ENCODE measurements at regions of chr3 and their contacts with region 1.

Region 1: GRCh38 chr3:32296256-32297204 is 58.0 kb downstream of the CMTM8 start:
- DNase-seq: no peak
- ATAC-seq: peak; percentile 94
- H3K4me3 ChIP-seq: no peak overlapping the region
- H3K27ac ChIP-seq: no peak overlapping the region
- H3K4me1 ChIP-seq: no peaks in the 10 kb centered on the region
- H3K27me3 ChIP-seq: no peaks in the 10 kb centered on the region; a peak in 1 of 4 replicates
- CTCF ChIP-seq: peak; percentile 71 to 89 (median 81)
- EP300 ChIP-seq: no peak
- POLR2A ChIP-seq: no peak
- RAD21 ChIP-seq: peak; percentile 67

Region 2: GRCh38 chr3:32045091-32045964 is 251.2 kb before region 1 on chr3:
- CTCF ChIA-PET with region 1: no interaction called
- POLR2A ChIA-PET with region 1: no interaction called
- RAD21 ChIA-PET with region 1: no interaction called
- SMC1A ChIA-PET with region 1: no interaction called
- in situ Hi-C with region 1: no loop called
- intact Hi-C with region 1: no loop called
- DNase-seq: no peak
- ATAC-seq: no peak
- H3K4me3 ChIP-seq: no peak overlapping the region
- H3K27ac ChIP-seq: no peak overlapping the region
- H3K4me1 ChIP-seq: no peaks in the 10 kb centered on the region
- H3K27me3 ChIP-seq: no peaks in the 10 kb centered on the region
- CTCF ChIP-seq: no peak
- EP300 ChIP-seq: no peak
- POLR2A ChIP-seq: no peak
- RAD21 ChIP-seq: no peak

Region 3: GRCh38 chr3:32177702-32178198 is 118.8 kb before region 1 on chr3:
- CTCF ChIA-PET with region 1: interaction called, 11 read pairs
- POLR2A ChIA-PET with region 1: no interaction called
- RAD21 ChIA-PET with region 1: no interaction called
- SMC1A ChIA-PET with region 1: interaction called, 3 read pairs
- in situ Hi-C with region 1: no loop called
- intact Hi-C with region 1: loop called (anchors 5 kb)
- DNase-seq: no peak
- ATAC-seq: peak; percentile 95
- H3K4me3 ChIP-seq: no peak overlapping the region
- H3K27ac ChIP-seq: no peak overlapping the region
- H3K4me1 ChIP-seq: no peaks in the 10 kb centered on the region
- H3K27me3 ChIP-seq: no peaks in the 10 kb centered on the region; a peak in 1 of 4 replicates
- CTCF ChIP-seq: peak; percentile 63 to 86 (median 82)
- EP300 ChIP-seq: no peak
- POLR2A ChIP-seq: no peak
- RAD21 ChIP-seq: peak; percentile 48

Region 4: DNA sequence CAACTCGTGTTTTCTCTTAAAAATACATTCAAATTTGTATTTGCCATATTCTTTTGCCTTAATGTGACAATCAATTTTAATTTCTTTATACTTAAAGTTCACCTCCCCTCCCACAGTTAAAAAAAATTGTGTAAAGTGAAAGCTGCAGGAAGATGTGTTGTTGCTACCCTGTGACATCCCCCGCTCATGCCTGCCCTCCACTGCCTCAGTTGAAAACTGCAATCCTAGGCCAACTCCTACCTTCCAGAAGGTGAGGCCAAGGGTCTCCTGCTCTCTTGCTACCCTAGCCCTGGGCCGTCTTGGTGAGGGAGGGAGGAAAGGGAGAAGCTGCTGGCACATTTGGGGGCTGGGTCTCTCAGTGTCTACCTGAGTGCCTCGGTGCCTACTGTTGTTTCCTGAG is 38.1 kb after region 1 on chr3:
- CTCF ChIA-PET with region 1: interaction called, 25 read pairs
- POLR2A ChIA-PET with region 1: no interaction called
- RAD21 ChIA-PET with region 1: interaction called, 11 read pairs
- SMC1A ChIA-PET with region 1: interaction called, 9 read pairs
- in situ Hi-C with region 1: no loop called
- intact Hi-C with region 1: loop called (anchors 5 kb)
- DNase-seq: no peak
- ATAC-seq: peak; percentile 80
- H3K4me3 ChIP-seq: no peak overlapping the region
- H3K27ac ChIP-seq: no peak overlapping the region
- H3K4me1 ChIP-seq: no peaks in the 10 kb centered on the region
- H3K27me3 ChIP-seq: no peaks in the 10 kb centered on the region; a peak in 1 of 4 replicates
- CTCF ChIP-seq: peak; percentile 45 to 51 (median 51); a peak in 5 of 6 replicates
- EP300 ChIP-seq: no peak
- POLR2A ChIP-seq: no peak
- RAD21 ChIP-seq: peak; percentile 66

Region 5: GRCh38 chr3:32340039-32340438 is 43.5 kb after region 1 on chr3:
- CTCF ChIA-PET with region 1: interaction called, 25 read pairs
- POLR2A ChIA-PET with region 1: no interaction called
- RAD21 ChIA-PET with region 1: interaction called, 11 read pairs
- SMC1A ChIA-PET with region 1: interaction called, 9 read pairs
- in situ Hi-C with region 1: no loop called
- intact Hi-C with region 1: loop called (anchors 2 kb)
- DNase-seq: no peak
- ATAC-seq: peak; percentile 75
- H3K4me3 ChIP-seq: no peak overlapping the region
- H3K27ac ChIP-seq: no peak overlapping the region
- H3K4me1 ChIP-seq: no peaks in the 10 kb centered on the region
- H3K27me3 ChIP-seq: no peaks in the 10 kb centered on the region; a peak in 1 of 4 replicates
- CTCF ChIP-seq: peak; percentile 33 to 39 (median 38); a peak in 4 of 6 replicates
- EP300 ChIP-seq: no peak
- POLR2A ChIP-seq: no peak
- RAD21 ChIP-seq: peak; percentile 70

Region 6: GRCh38 chr3:32401556-32402081 is 105.1 kb after region 1 on chr3:
- CTCF ChIA-PET with region 1: interaction called, 5 read pairs
- POLR2A ChIA-PET with region 1: no interaction called
- RAD21 ChIA-PET with region 1: no interaction called
- SMC1A ChIA-PET with region 1: interaction called, 3 read pairs
- in situ Hi-C with region 1: no loop called
- intact Hi-C with region 1: loop called (anchors 2 kb)
- DNase-seq: no peak
- ATAC-seq: peak; percentile 83
- H3K4me3 ChIP-seq: peak overlapping the region; percentile 61
- H3K27ac ChIP-seq: no peak overlapping the region
- H3K4me1 ChIP-seq: peaks cover 3% of the 10 kb centered on the region
- H3K27me3 ChIP-seq: peaks cover 0 to 3% of the 10 kb centered on the region in 2 experiments; a peak in 1 of 4 replicates
- CTCF ChIP-seq: no peak
- EP300 ChIP-seq: no peak
- POLR2A ChIP-seq: no peak
- RAD21 ChIP-seq: no peak

Region 7: GRCh38 chr3:32641356-32641755 is 344.8 kb after region 1 on chr3:
- CTCF ChIA-PET with region 1: no interaction called
- POLR2A ChIA-PET with region 1: no interaction called
- RAD21 ChIA-PET with region 1: interaction called, 3 read pairs
- SMC1A ChIA-PET with region 1: no interaction called
- in situ Hi-C with region 1: no loop called
- intact Hi-C with region 1: loop called (anchors 10 kb)
- DNase-seq: no peak
- ATAC-seq: no peak
- H3K4me3 ChIP-seq: no peak overlapping the region
- H3K27ac ChIP-seq: no peak overlapping the region
- H3K4me1 ChIP-seq: no peaks in the 10 kb centered on the region
- H3K27me3 ChIP-seq: no peaks in the 10 kb centered on the region; a peak in 1 of 4 replicates
- CTCF ChIP-seq: no peak
- EP300 ChIP-seq: no peak
- POLR2A ChIP-seq: no peak
- RAD21 ChIP-seq: no peak

Region 8: GRCh38 chr3:32667122-32667521 is 370.6 kb after region 1 on chr3:
- CTCF ChIA-PET with region 1: interaction called, 3 read pairs
- POLR2A ChIA-PET with region 1: no interaction called
- RAD21 ChIA-PET with region 1: no interaction called
- SMC1A ChIA-PET with region 1: no interaction called
- in situ Hi-C with region 1: loop called (anchors 10 kb)
- intact Hi-C with region 1: loop called (anchors 2 kb)
- DNase-seq: no peak
- ATAC-seq: no peak
- H3K4me3 ChIP-seq: no peak overlapping the region
- H3K27ac ChIP-seq: no peak overlapping the region
- H3K4me1 ChIP-seq: no peaks in the 10 kb centered on the region
- H3K27me3 ChIP-seq: peaks cover 0 to 2% of the 10 kb centered on the region in 2 experiments; a peak in 2 of 4 replicates
- CTCF ChIP-seq: no peak
- EP300 ChIP-seq: no peak
- POLR2A ChIP-seq: no peak
- RAD21 ChIP-seq: no peak